HAP-1 (cell line): ENCODE measurements at regions of chr18 and their contacts with region 1.

Region 1: GRCh38 chr18:21191596-21192307 is 50.3 kb upstream of the GREB1L start:
- DNase-seq: peak; percentile 70 to 85
- H3K4me3 ChIP-seq: no peak overlapping the region
- H3K4me1 ChIP-seq: 0 out of 2 replicates have a peak, but pooled peaks cover 2% of the 10 kb centered on the region
- H3K27me3 ChIP-seq: no peaks in the 10 kb centered on the region

Region 2: GRCh38 chr18:21053127-21053526 is 138.6 kb before region 1 on chr18:
- in situ Hi-C with region 1: no loop called
- DNase-seq: no peak
- H3K4me3 ChIP-seq: no peak overlapping the region
- H3K4me1 ChIP-seq: no peaks in the 10 kb centered on the region
- H3K27me3 ChIP-seq: no peaks in the 10 kb centered on the region

Region 3: GRCh38 chr18:21254576-21254975 is 62.8 kb after region 1 on chr18:
- in situ Hi-C with region 1: no loop called
- DNase-seq: no peak
- H3K4me3 ChIP-seq: no peak overlapping the region
- H3K4me1 ChIP-seq: peaks cover 61% of the 10 kb centered on the region
- H3K27me3 ChIP-seq: no peaks in the 10 kb centered on the region

Region 4: DNA sequence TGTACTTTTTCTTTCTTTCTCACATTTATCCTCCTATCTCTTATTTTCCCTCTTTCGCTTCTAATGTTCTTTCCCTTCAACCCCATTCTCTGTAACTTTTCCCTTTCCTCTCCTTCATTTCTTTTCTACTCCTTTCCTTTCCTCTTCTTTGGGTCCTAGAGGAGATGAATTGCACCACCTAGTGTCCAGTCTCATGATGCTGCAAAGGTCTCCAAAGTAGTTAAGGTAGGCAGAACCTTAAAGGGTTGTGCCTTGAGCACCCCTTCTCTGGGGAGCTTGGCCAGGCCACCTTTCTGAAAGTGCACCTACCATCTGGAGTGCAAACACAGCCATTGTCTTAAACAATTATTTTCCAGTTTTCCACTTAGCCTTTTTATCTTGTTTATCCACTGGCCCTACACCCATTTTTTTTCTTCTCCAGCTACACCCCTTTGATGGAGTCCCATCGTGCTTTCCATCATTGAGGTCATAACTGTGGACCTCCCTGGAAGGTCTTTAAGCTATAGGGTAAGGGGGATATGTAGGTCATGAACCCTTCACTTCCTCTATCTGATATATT is 252.8 kb after region 1 on chr18:
- in situ Hi-C with region 1: loop called (anchors 5 kb)
- DNase-seq: peak; percentile 59 to 73
- H3K4me3 ChIP-seq: no peak overlapping the region
- H3K4me1 ChIP-seq: no peaks in the 10 kb centered on the region; the same call in 1 of the 2 replicates
- H3K27me3 ChIP-seq: no peaks in the 10 kb centered on the region

Region 5: GRCh38 chr18:22639026-22639463 is 1447.3 kb after region 1 on chr18:
- in situ Hi-C with region 1: no loop called
- DNase-seq: no peak
- H3K4me3 ChIP-seq: no peak overlapping the region
- H3K4me1 ChIP-seq: no peaks in the 10 kb centered on the region
- H3K27me3 ChIP-seq: no peaks in the 10 kb centered on the region